ENCODE measurements at regions of chr6 and their contacts with region 1.

Region 1: GRCh38 chr6:63571881-63572732 is at the starts of genes LOC128125822 and PTP4A1:
- DNase-seq: peak; percentile 99
- H3K4me3 ChIP-seq: peak within 1 kb of the TSS; percentile 81 to 100 (median 95)
- H3K27ac ChIP-seq: peak within 1 kb of the TSS; percentile 97 to 100 (median 100)
- H3K4me1 ChIP-seq: peaks cover 0 to 40% (median 21%) of the 10 kb centered on the region in 4 donors
- H3K27me3 ChIP-seq: no peaks in the 10 kb centered on the region
- CTCF ChIP-seq: no peak
- EP300 ChIP-seq: peak; percentile 55 to 97 (median 88)
- POLR2A ChIP-seq: peak; percentile 90 to 97
- total RNA-seq, gene PTP4A1: 21.4 to 56.6 (median 42.2) TPM

Region 2: DNA sequence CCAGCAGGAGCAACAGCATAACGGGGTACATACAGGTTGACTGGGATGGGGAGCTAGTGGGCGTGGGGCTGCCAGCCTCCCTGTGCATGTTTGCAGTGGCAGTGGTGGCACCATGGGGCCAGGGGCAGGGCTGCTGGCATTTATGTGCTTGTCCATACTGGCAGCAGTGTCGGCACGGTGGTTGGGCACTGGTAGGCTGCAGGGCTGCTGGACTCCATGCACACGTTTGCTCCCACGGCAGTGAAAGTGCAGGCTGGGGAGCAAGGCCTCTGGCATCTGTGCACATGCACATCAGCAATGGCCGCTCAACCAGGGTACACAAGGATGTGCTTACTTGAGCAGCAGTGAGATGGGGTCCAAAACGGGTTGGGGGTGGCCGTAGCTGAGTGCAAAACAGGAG is 1126.6 kb before region 1 on chr6:
- intact Hi-C with region 1: no loop called
- DNase-seq: no peak
- H3K4me3 ChIP-seq: no peak overlapping the region
- H3K27ac ChIP-seq: no peak overlapping the region
- H3K4me1 ChIP-seq: no peaks in the 10 kb centered on the region
- H3K27me3 ChIP-seq: no peaks in the 10 kb centered on the region
- CTCF ChIP-seq: no peak
- EP300 ChIP-seq: no peak
- POLR2A ChIP-seq: no peak

Region 3: DNA sequence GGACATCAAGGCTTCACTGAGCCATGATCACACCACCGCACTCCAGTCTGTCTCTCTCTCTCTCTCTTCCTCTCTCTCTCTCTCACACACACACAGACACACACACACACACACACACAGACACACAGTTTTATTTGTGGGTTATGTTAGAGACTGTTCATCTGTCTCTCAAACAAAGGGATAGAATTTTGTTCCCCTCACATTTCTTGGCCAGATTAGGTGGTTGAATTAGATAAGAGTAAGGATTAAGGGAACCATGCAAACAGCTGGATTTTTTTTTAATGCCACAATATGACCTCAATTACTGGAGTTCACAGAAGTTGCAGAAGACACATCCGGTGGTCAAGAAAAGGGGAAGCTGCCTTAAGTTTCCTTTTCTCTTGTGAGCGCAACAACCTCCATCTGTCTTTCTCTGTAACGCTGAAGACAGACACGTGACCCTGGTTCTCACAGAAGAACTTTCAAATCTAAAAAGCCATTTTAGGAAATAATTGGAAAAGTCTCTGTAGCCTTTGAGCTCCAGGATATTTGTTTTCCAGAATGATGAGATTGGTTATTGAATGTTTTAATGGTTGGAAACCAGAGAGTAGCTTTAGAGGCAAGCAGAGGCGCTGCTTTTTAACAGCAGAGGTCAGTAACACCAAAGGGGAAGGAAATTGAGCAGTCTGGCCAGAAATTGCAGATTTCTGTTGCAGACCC is 219.4 kb before region 1 on chr6:
- intact Hi-C with region 1: loop called (anchors 2 kb)
- DNase-seq: no peak
- H3K4me3 ChIP-seq: no peak overlapping the region
- H3K27ac ChIP-seq: no peak overlapping the region
- H3K4me1 ChIP-seq: peaks cover 0 to 4% (median 0%) of the 10 kb centered on the region in 4 donors
- H3K27me3 ChIP-seq: no peaks in the 10 kb centered on the region
- CTCF ChIP-seq: peak; percentile 25 to 61 (median 31)
- EP300 ChIP-seq: no peak
- POLR2A ChIP-seq: no peak

Region 4: DNA sequence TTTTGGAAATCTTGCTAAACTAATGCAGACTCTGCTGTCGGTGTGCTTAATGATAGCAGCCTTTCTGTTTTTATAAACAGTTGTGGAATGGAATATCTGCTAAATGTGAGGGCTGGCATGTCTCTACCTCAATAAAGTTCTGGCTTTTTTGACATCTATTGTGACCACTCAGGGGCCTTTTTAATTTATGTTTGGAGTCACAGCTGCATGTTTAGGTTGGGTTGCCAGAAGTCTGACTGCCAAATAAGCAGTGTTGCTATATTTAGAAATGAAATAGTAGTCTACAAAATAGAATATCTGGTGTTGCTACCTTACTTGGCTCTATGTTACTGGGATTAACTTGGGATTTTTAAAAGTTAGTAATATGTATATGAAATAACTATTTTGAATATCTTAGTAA is 125.0 kb before region 1 on chr6:
- intact Hi-C with region 1: loop called (anchors 2 kb)
- DNase-seq: no peak
- H3K4me3 ChIP-seq: no peak overlapping the region
- H3K27ac ChIP-seq: peak overlapping the region in 3 of 4 donors; percentile 51 to 71 (median 56)
- H3K4me1 ChIP-seq: peaks cover 0 to 23% (median 14%) of the 10 kb centered on the region in 4 donors
- H3K27me3 ChIP-seq: no peaks in the 10 kb centered on the region
- CTCF ChIP-seq: no peak
- EP300 ChIP-seq: peak; percentile 18 to 75 (median 58)
- POLR2A ChIP-seq: no peak

Region 5: GRCh38 chr6:63509652-63510352 is 62.3 kb before region 1 on chr6:
- intact Hi-C with region 1: loop called (anchors 2 kb)
- DNase-seq: peak; percentile 92
- H3K4me3 ChIP-seq: peak overlapping the region in 1 of 4 donors; percentile 17
- H3K27ac ChIP-seq: peak overlapping the region; percentile 62 to 83 (median 76)
- H3K4me1 ChIP-seq: peaks cover 0 to 15% (median 4%) of the 10 kb centered on the region in 4 donors
- H3K27me3 ChIP-seq: no peaks in the 10 kb centered on the region
- CTCF ChIP-seq: no peak
- EP300 ChIP-seq: peak; percentile 22 to 82 (median 64)
- POLR2A ChIP-seq: no peak

Region 6: DNA sequence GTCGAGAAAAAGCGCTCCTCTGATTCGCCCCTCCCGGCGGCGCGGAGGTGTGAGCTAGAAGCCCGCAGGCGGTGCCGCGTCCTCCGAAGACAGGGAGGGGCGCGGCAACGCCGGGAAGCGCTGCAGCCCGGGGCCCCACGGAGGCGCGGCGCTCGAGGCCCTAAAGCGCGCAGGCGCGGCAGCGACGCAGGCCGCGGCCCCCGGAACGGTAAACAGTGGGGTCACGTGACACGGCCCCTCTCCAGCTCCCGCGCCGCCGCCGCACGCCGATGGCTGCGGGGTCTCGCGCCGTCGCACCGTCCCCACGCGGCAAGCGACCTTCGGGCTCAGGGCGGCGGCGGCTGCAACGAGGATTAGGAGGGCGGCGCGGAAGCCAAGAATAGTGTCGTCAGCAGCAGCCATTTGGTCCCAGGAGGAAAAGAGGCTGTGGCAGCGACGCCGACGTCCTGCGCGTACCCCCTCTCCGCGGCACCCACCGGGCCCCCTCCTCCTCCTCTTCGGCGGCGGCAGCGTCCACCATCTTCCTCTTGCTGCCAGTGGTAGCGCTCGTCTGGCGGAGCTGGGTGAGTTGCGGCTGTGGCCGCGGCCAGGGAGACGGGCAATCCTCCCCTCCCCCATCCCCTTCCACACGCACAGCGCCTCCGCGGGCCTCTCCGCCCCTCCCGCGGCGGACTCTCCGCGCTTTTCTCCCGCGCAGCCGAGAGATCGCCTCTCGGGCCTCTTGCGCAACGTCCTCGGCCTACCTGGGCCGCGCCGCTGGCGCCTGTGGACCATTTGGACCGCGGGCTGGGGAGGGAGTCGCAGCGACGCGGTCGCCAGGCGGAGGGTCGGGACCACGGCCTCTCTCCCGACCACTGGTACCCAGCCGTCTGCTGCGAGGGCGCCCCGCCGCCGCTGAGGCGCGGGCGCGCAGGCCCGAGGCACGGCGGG is 63.7 kb after region 1 on chr6 and contains the start of gene PHF3:
- intact Hi-C with region 1: loop called (anchors 2 kb)
- DNase-seq: peak; percentile 95
- H3K4me3 ChIP-seq: peak within 1 kb of the TSS; percentile 76 to 93 (median 90)
- H3K27ac ChIP-seq: peak within 1 kb of the TSS; percentile 92 to 99 (median 96)
- H3K4me1 ChIP-seq: peaks cover 0 to 47% (median 38%) of the 10 kb centered on the region in 4 donors
- H3K27me3 ChIP-seq: no peaks in the 10 kb centered on the region
- CTCF ChIP-seq: peak in 1 of 4 experiments; percentile 18
- EP300 ChIP-seq: peak in 1 of 4 donors; percentile 5
- POLR2A ChIP-seq: peak in 1 of 2 donors; percentile 51
- total RNA-seq, gene PHF3: 59.6 to 80.5 (median 77.4) TPM

Region 7: GRCh38 chr6:63975699-63976098 is 403.6 kb after region 1 on chr6:
- intact Hi-C with region 1: no loop called
- DNase-seq: no peak
- H3K4me3 ChIP-seq: no peak overlapping the region
- H3K27ac ChIP-seq: no peak overlapping the region
- H3K4me1 ChIP-seq: no peaks in the 10 kb centered on the region
- H3K27me3 ChIP-seq: no peaks in the 10 kb centered on the region
- CTCF ChIP-seq: no peak
- EP300 ChIP-seq: no peak
- POLR2A ChIP-seq: no peak

Measured in sigmoid colon (tissue), 7 donors.